HCT116 (cell line): ENCODE measurements at regions of chr20 and their contacts with region 1.

Region 1: GRCh38 chr20:45229264-45230056 is 8.3 kb downstream of the SEMG2 start:
- DNase-seq: peak; percentile 60
- ATAC-seq: peak; percentile 100
- H3K4me3 ChIP-seq: peak overlapping the region; percentile 20 to 35
- H3K27ac ChIP-seq: no peak overlapping the region
- H3K4me1 ChIP-seq: peaks cover 0 to 6% of the 10 kb centered on the region in 2 experiments; a peak in 2 of 4 replicates
- H3K27me3 ChIP-seq: peaks cover 9% of the 10 kb centered on the region
- CTCF ChIP-seq: peak; percentile 85 to 98 (median 97)
- POLR2A ChIP-seq: no peak
- RAD21 ChIP-seq: peak; percentile 85

Region 2: GRCh38 chr20:45011108-45011526 is 218.3 kb before region 1 on chr20:
- CTCF ChIA-PET with region 1: interaction called, 3 read pairs
- POLR2A ChIA-PET with region 1: no interaction called
- RAD21 ChIA-PET with region 1: no interaction called
- intact Hi-C with region 1: loop called (anchors 1 kb)
- DNase-seq: peak; percentile 36
- ATAC-seq: peak; percentile 81
- H3K4me3 ChIP-seq: no peak overlapping the region
- H3K27ac ChIP-seq: no peak overlapping the region
- H3K4me1 ChIP-seq: peaks cover 13 to 19% of the 10 kb centered on the region in 2 experiments
- H3K27me3 ChIP-seq: no peaks in the 10 kb centered on the region
- CTCF ChIP-seq: peak; percentile 68 to 88 (median 74); a peak in 5 of 6 replicates
- POLR2A ChIP-seq: no peak
- RAD21 ChIP-seq: peak; percentile 80

Region 3: DNA sequence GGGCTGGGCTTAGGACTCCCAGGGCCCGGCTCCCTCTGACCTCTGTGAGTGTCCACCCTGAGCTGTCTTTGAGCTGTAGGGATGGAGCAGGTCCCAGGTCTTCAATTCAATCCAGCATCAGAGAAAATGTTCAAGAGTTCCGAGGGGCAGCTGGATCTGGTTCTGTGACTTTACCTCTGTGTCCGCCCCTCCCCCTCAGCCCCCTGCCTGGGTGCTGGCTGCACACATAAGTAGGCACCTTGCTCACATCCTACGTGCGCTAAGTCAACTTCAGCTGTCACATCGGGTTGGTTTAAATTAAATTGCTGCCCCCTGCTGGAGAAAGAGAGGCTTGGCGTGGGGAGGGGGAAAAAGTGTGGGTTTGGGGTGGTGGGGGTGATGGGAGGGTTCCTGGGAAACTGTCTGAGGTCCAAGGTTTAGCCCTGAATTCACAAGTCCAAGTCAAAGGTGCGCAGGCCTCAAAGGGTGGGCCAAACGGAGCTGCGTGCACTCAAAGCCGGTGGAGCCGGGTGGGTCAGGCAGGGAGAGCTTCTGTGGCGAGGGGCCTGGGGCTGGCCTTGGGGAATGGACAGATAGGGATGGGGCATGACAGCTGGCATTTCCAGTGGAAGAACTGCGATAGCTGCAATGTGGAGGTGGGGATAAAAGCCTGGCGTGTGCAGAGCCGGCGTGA is 117.5 kb before region 1 on chr20:
- CTCF ChIA-PET with region 1: interaction called, 15 read pairs
- POLR2A ChIA-PET with region 1: no interaction called
- RAD21 ChIA-PET with region 1: no interaction called
- intact Hi-C with region 1: no loop called
- DNase-seq: no peak
- ATAC-seq: peak; percentile 79
- H3K4me3 ChIP-seq: no peak overlapping the region
- H3K27ac ChIP-seq: no peak overlapping the region
- H3K4me1 ChIP-seq: 0 out of 4 replicates have a peak, but pooled peaks cover 0 to 3% of the 10 kb centered on the region in 2 experiments
- H3K27me3 ChIP-seq: no peaks in the 10 kb centered on the region; the same call in 1 of the 2 replicates
- CTCF ChIP-seq: peak; percentile 42 to 80 (median 45); a peak in 5 of 6 replicates
- POLR2A ChIP-seq: no peak
- RAD21 ChIP-seq: peak; percentile 56; the same call in 1 of the 2 replicates

Region 4: DNA sequence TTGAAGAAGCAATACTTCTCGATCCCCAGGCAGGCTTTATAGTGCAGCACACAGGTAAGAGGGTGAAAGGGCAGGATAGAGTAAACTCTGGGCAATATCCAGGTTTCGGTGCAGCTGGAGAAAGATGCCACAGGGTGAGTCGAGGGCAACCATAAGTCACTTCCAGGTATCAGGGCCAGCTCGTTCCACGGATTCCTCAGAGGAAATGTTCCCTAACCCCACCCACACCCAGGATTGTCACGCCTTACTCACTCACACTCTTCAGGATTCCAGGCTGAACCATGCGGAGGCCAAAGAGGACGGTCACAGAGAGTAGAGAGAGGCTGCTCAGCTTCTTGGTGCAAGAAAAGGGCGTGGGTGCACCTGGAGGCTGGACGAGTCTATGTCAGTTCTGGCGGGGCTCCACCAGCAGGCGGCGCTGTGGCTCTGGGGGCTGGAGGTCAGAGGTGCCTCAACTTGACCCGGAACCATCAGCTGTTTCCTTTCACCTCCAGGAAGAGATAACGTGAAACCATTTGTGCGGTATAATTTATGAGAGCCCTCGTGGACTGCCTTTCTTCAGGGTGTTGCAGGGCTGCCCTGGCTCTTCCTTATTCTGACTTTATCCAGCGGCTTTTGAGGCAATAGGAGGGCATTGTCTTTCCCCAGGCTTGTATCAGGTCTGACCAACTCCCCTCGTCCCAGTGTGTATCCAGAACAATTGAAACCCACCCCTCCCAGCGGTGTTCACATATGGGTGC is 90.7 kb before region 1 on chr20:
- CTCF ChIA-PET with region 1: interaction called, 28 read pairs
- POLR2A ChIA-PET with region 1: interaction called, 4 read pairs
- RAD21 ChIA-PET with region 1: interaction called, 4 to 6 read pairs
- intact Hi-C with region 1: loop called (anchors 5 kb)
- DNase-seq: peak; percentile 21
- ATAC-seq: peak; percentile 99
- H3K4me3 ChIP-seq: no peak overlapping the region
- H3K27ac ChIP-seq: no peak overlapping the region
- H3K4me1 ChIP-seq: peaks cover 0 to 7% of the 10 kb centered on the region in 2 experiments; a peak in 2 of 4 replicates
- H3K27me3 ChIP-seq: no peaks in the 10 kb centered on the region
- CTCF ChIP-seq: peak; percentile 80 to 97 (median 95)
- POLR2A ChIP-seq: peak; percentile 31
- RAD21 ChIP-seq: peak; percentile 75

Region 5: GRCh38 chr20:45293041-45294002 is 63.9 kb after region 1 on chr20:
- CTCF ChIA-PET with region 1: interaction called, 12 read pairs
- POLR2A ChIA-PET with region 1: no interaction called
- RAD21 ChIA-PET with region 1: no interaction called
- intact Hi-C with region 1: no loop called
- DNase-seq: peak; percentile 26
- ATAC-seq: peak; percentile 91
- H3K4me3 ChIP-seq: peak overlapping the region; percentile 32 to 59
- H3K27ac ChIP-seq: peak overlapping the region; percentile 23; the same call in 1 of the 2 replicates
- H3K4me1 ChIP-seq: peaks cover 0 to 12% of the 10 kb centered on the region in 2 experiments; a peak in 2 of 4 replicates
- H3K27me3 ChIP-seq: no peaks in the 10 kb centered on the region
- CTCF ChIP-seq: peak; percentile 40 to 97 (median 94); a peak in 5 of 6 replicates
- POLR2A ChIP-seq: no peak
- RAD21 ChIP-seq: no peak

Region 6: DNA sequence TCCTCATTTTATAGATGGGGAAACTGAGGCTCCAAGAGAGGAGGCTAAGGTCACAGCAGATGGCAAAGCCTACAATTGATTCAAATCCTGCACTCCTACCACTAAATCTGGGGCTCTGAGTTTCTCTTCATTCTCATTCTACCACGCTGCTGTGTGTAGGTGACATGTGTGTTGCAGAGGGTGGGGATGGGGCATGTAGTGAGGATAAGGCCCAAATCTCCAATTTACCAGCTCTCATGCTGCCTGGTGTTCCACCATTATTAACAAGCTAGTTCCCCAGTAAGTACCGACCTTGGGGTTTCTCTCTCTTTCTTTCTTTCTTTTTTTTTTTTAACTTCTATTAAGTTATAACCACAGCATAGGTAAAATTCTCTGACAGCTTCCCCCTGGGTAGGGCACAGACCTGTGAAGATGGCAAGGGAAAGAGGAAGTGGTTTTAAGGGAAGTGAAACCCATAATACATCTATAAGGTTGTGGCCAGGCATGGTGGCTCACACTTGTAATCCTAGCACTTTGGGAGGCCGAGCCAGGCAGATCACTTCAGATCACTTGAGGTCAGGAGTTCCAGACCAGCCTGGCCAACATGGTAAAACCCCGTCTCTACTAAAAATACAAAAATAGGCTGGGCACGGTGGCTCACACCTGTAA is 91.6 kb after region 1 on chr20:
- CTCF ChIA-PET with region 1: no interaction called
- POLR2A ChIA-PET with region 1: no interaction called
- RAD21 ChIA-PET with region 1: no interaction called
- intact Hi-C with region 1: no loop called
- DNase-seq: no peak
- ATAC-seq: no peak
- H3K4me3 ChIP-seq: no peak overlapping the region
- H3K27ac ChIP-seq: no peak overlapping the region
- H3K4me1 ChIP-seq: no peaks in the 10 kb centered on the region
- H3K27me3 ChIP-seq: no peaks in the 10 kb centered on the region
- CTCF ChIP-seq: no peak
- POLR2A ChIP-seq: no peak
- RAD21 ChIP-seq: no peak

Region 7: GRCh38 chr20:45337367-45338120 is 108.1 kb after region 1 on chr20:
- CTCF ChIA-PET with region 1: no interaction called
- POLR2A ChIA-PET with region 1: no interaction called
- RAD21 ChIA-PET with region 1: no interaction called
- intact Hi-C with region 1: no loop called
- DNase-seq: no peak
- ATAC-seq: peak; percentile 60
- H3K4me3 ChIP-seq: peak overlapping the region; percentile 2 to 45
- H3K27ac ChIP-seq: peak overlapping the region; percentile 84
- H3K4me1 ChIP-seq: peaks cover 62 to 73% of the 10 kb centered on the region in 2 experiments
- H3K27me3 ChIP-seq: no peaks in the 10 kb centered on the region
- CTCF ChIP-seq: no peak
- POLR2A ChIP-seq: no peak
- RAD21 ChIP-seq: no peak